MCF 10A (cell line): ENCODE measurements at regions of chr9 and their contacts with region 1.

Region 1: GRCh38 chr9:34701769-34702736 is 7.9 kb downstream of the CCL21 start:
- DNase-seq: peak; percentile 69
- H3K4me3 Mint-ChIP-seq: peak overlapping the region; percentile 59
- H3K27ac Mint-ChIP-seq: no peak overlapping the region
- H3K4me1 Mint-ChIP-seq: no peaks in the 10 kb centered on the region
- H3K27me3 Mint-ChIP-seq: peaks cover 13% of the 10 kb centered on the region
- CTCF ChIP-seq: peak; percentile 96

Region 2: GRCh38 chr9:34611829-34612630 is 90.0 kb before region 1 on chr9 and contains the start of gene RPP25L:
- CTCF ChIA-PET with region 1: interaction called, 12 read pairs
- POLR2A ChIA-PET with region 1: no interaction called
- intact Hi-C with region 1: no loop called
- DNase-seq: peak; percentile 83
- H3K4me3 Mint-ChIP-seq: peak within 1 kb of the TSS; percentile 91
- H3K27ac Mint-ChIP-seq: peak within 1 kb of the TSS; percentile 97
- H3K4me1 Mint-ChIP-seq: peaks cover 14% of the 10 kb centered on the region
- H3K27me3 Mint-ChIP-seq: no peaks in the 10 kb centered on the region
- CTCF ChIP-seq: no peak
- total RNA-seq, gene RPP25L: 41.6 and 42.8 TPM in 2 replicates

Region 3: GRCh38 chr9:34646211-34647083 is 55.6 kb before region 1 on chr9 and contains the start of gene GALT:
- CTCF ChIA-PET with region 1: interaction called, 17 read pairs
- POLR2A ChIA-PET with region 1: interaction called, 3 read pairs
- intact Hi-C with region 1: loop called (anchors 5 kb)
- DNase-seq: peak; percentile 92
- H3K4me3 Mint-ChIP-seq: peak within 1 kb of the TSS; percentile 84
- H3K27ac Mint-ChIP-seq: peak within 1 kb of the TSS; percentile 65
- H3K4me1 Mint-ChIP-seq: peaks cover 21% of the 10 kb centered on the region
- H3K27me3 Mint-ChIP-seq: no peaks in the 10 kb centered on the region
- CTCF ChIP-seq: peak; percentile 17
- total RNA-seq, gene GALT: 21.3 and 26.8 TPM in 2 replicates

Region 4: DNA sequence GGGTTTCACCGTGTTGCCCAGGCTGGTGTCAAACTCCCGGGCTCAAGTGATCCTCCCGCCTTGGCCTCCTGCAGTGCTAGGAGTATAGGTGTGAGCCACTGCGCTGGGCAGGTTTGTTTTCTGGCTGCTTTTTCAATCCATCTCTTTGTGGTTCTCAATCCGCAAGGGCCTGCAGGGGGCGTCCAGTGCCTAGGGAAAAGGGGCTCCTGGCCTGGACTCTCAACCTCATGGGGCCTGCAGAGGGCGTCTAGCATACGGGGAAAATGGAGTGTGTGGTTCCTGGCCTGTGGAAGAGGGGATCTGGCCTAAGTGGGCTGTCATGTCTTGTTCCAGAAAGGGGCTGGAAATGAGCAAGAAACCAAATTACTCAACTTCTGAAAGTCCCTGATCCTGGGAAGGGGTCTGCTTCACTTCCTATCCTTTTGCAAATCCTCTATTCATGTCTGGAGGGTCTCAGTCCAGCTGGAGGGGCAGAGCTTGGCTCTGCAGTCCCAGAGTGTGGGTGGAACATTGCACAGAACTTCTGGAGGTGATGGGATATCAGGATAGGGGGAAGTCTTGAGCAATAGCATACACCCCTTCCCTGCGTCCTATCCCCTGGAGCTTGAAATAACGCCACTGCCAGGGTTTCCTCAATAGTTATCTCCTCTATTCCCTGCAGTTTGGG is 26.9 kb before region 1 on chr9:
- CTCF ChIA-PET with region 1: interaction called, 4 read pairs
- POLR2A ChIA-PET with region 1: no interaction called
- intact Hi-C with region 1: loop called (anchors 1 kb)
- DNase-seq: peak; percentile 69
- H3K4me3 Mint-ChIP-seq: no peak overlapping the region
- H3K27ac Mint-ChIP-seq: no peak overlapping the region
- H3K4me1 Mint-ChIP-seq: no peaks in the 10 kb centered on the region
- H3K27me3 Mint-ChIP-seq: no peaks in the 10 kb centered on the region
- CTCF ChIP-seq: peak; percentile 54

Region 5: GRCh38 chr9:34717996-34718614 is 16.1 kb after region 1 on chr9:
- CTCF ChIA-PET with region 1: interaction called, 24 read pairs
- POLR2A ChIA-PET with region 1: interaction called, 3 read pairs
- intact Hi-C with region 1: no loop called
- DNase-seq: no peak
- H3K4me3 Mint-ChIP-seq: no peak overlapping the region
- H3K27ac Mint-ChIP-seq: no peak overlapping the region
- H3K4me1 Mint-ChIP-seq: no peaks in the 10 kb centered on the region
- H3K27me3 Mint-ChIP-seq: peaks cover 12% of the 10 kb centered on the region
- CTCF ChIP-seq: no peak